Right lobe of liver (tissue), 6 donors: ENCODE measurements at regions of chr18 and their contacts with region 1.

Region 1: DNA sequence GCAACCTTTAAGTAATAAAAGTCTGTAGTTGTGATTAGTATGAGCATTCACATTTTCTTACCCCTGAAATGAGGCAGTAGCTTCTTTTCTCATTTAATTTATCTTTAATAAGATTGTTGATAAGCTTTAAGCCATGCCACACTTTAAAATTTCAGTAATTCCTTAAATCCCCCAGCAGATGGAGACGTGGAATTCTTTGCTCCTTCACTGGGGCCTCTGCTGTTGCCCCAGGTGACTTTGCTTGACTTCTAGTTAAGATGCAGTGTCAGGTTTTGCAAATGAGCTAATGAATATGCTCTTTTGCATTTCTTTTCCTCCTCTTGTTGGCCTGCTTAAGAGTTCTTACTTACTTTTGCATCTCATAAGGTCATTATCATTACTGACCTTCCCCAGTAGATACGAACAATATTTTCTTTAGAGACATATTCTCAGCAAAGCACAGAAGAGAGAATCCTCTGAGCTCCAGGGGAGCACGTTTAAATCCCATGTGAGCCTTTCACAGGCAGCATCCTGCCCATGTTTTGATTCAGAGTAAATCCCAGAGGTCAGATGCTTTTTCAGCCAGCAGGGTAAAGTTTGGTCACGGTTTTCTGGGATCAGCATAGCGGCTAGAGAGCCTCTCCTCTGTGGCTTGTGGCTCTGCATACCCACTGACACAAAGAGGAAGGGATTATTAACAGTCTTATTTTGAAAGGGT is 222.9 kb downstream of the PTPRM start:
- DNase-seq: no peak
- ATAC-seq: peak; percentile 57 to 81 (median 73)
- H3K4me3 ChIP-seq: no peak overlapping the region
- H3K27ac ChIP-seq: no peak overlapping the region
- H3K4me1 ChIP-seq: no peaks in the 10 kb centered on the region
- H3K27me3 ChIP-seq: no peaks in the 10 kb centered on the region
- CTCF ChIP-seq: peak; percentile 46 to 50 (median 49)
- POLR2A ChIP-seq: no peak

Region 2: DNA sequence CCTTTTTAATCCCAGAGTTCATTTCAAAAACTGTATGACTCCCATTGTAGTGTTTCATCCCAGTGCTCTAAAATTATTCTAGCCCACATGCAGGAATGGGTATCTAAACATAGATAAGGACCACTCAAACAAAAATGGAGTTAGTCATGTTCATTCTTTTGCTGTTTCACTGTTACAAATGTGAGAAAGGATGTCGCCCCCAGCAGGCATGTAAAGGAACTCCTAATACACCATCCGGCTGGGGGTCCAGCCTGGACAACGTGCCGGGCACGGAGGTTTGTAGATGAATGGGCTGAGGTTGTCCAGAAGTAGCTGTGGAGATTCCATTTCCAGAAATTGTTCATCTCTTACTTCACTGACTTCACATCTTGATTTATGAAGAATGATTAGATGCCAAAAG is 717.4 kb after region 1 on chr18:
- intact Hi-C with region 1: loop called in 1 of 2 experiments (anchors 10 kb)
- DNase-seq: no peak
- ATAC-seq: no peak
- H3K4me3 ChIP-seq: no peak overlapping the region
- H3K27ac ChIP-seq: no peak overlapping the region
- H3K4me1 ChIP-seq: no peaks in the 10 kb centered on the region
- H3K27me3 ChIP-seq: no peaks in the 10 kb centered on the region
- CTCF ChIP-seq: peak in 1 of 4 donors; percentile 13
- POLR2A ChIP-seq: no peak